ENCODE measurements at regions of chr11 and their contacts with region 1.

Region 1: DNA sequence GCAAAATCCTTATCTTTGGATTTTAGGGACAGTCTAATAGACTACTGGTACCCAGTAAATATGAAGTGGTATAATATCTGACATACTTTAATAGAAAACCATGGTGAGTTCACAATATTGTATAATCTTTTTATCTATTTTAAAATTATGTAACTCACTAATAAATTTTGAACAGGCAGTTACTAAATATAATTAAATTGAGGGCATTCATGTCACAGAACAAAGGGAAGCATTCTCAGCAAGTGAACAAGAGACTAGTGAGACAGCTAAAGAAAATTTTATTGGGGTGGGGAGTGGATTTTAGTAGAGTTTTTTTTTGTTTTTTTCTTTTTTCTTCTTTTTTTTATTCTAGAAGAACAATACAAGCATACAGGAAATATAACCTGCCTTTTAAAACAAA is 55.0 kb downstream of the DNAJC24 start:
- DNase-seq: no peak
- ATAC-seq: no peak
- H3K4me3 ChIP-seq: no peak overlapping the region
- H3K4me3 Mint-ChIP-seq: no peak overlapping the region
- H3K27ac ChIP-seq: no peak overlapping the region
- H3K27ac Mint-ChIP-seq: no peak overlapping the region
- H3K4me1 ChIP-seq: no peaks in the 10 kb centered on the region
- H3K4me1 Mint-ChIP-seq: peaks cover 0 to 7% (median 0%) of the 10 kb centered on the region in 7 donors
- H3K27me3 ChIP-seq: no peaks in the 10 kb centered on the region
- H3K27me3 Mint-ChIP-seq: no peaks in the 10 kb centered on the region

Region 2: GRCh38 chr11:31445621-31446020 is 21.0 kb after region 1 on chr11:
- CTCF ChIA-PET with region 1: no interaction called
- POLR2A ChIA-PET with region 1: no interaction called
- intact Hi-C with region 1: loop called in 1 of 2 experiments (anchors 2 kb)
- DNase-seq: no peak
- ATAC-seq: no peak
- H3K4me3 ChIP-seq: no peak overlapping the region
- H3K4me3 Mint-ChIP-seq: no peak overlapping the region
- H3K27ac ChIP-seq: no peak overlapping the region
- H3K27ac Mint-ChIP-seq: no peak overlapping the region
- H3K4me1 ChIP-seq: no peaks in the 10 kb centered on the region
- H3K4me1 Mint-ChIP-seq: peaks cover 0 to 8% (median 3%) of the 10 kb centered on the region in 7 donors
- H3K27me3 ChIP-seq: no peaks in the 10 kb centered on the region
- H3K27me3 Mint-ChIP-seq: no peaks in the 10 kb centered on the region

Measured in naive thymus-derived CD4-positive, alpha-beta T cell (primary cell).